ENCODE measurements at regions of chr1 and their contacts with region 1.

Region 1: GRCh38 chr1:17948594-17948993 is 159.0 kb upstream of the IGSF21 start:
- DNase-seq: no peak
- H3K4me3 ChIP-seq: no peak overlapping the region
- H3K27ac ChIP-seq: no peak overlapping the region
- H3K4me1 ChIP-seq: no peaks in the 10 kb centered on the region
- H3K27me3 ChIP-seq: peaks cover 28% of the 10 kb centered on the region
- CTCF ChIP-seq: no peak
- EP300 ChIP-seq: no peak
- POLR2A ChIP-seq: no peak

Region 2: DNA sequence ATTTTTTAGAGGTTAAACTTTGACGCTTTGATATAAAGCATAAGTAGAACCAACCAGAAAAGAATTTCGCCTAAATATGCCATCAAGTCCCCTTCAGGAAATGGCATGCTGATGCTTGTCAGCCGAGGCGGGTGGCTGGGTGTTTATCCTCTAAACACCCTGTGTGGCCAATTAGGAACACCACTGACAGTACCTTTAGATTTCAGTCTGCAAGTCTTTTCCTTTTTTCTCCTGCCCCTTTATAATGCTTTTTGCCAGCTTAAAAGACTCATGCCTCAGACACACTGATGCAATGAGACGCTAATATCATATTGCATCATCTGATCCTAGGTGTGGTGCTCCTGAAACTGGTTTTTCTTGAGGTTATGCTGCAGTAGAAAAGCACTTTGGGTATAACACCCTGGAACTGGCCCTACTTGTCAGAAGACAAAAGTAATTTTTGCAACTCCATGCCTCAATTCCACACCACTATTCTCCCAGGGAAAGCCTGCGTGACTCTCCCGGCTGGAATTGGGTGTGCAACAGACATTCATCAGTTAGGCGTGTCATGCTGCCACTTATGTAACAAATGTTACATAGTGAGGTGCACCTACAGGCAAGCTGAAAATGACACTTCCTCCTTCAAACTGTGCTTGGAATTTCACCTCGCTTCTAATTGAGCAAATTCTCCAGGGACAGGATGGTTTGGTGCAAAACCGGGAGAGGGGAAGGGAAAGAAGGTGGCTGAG is 507.2 kb before region 1 on chr1:
- in situ Hi-C with region 1: no loop called
- intact Hi-C with region 1: no loop called
- DNase-seq: no peak
- H3K4me3 ChIP-seq: no peak overlapping the region
- H3K27ac ChIP-seq: no peak overlapping the region
- H3K4me1 ChIP-seq: peaks cover 8 to 26% (median 16%) of the 10 kb centered on the region in 4 donors
- H3K27me3 ChIP-seq: no peaks in the 10 kb centered on the region
- CTCF ChIP-seq: peak in 2 of 5 experiments; percentile 18 to 37
- EP300 ChIP-seq: no peak
- POLR2A ChIP-seq: no peak

Region 3: GRCh38 chr1:17569200-17570161 is 379.1 kb before region 1 on chr1:
- in situ Hi-C with region 1: no loop called
- intact Hi-C with region 1: no loop called
- DNase-seq: peak; percentile 73
- H3K4me3 ChIP-seq: no peak overlapping the region
- H3K27ac ChIP-seq: peak overlapping the region; percentile 84 to 93 (median 86)
- H3K4me1 ChIP-seq: peaks cover 54 to 86% (median 80%) of the 10 kb centered on the region in 4 donors
- H3K27me3 ChIP-seq: no peaks in the 10 kb centered on the region
- CTCF ChIP-seq: no peak
- EP300 ChIP-seq: no peak
- POLR2A ChIP-seq: no peak

Region 4: DNA sequence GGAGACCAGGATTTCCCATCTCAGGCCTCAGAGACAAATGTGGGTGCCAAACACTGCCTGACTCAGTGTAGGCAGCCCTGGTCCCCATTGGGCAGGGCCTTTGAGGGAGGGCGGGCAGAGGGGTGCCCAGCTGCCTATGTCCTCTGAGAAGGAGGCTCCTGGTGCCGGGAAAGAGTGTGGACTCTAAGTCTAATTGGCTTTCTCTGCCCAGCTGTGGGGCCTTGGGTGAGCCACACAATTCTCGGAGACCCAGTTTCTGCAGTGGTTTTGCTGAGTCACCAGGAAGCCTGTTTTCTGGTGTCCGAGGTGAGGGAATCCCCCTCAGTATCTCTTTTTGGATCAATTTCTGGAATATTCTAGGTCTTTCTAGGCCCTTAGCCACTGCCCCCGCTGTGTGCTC is 228.7 kb before region 1 on chr1:
- in situ Hi-C with region 1: no loop called
- intact Hi-C with region 1: no loop called
- DNase-seq: no peak
- H3K4me3 ChIP-seq: no peak overlapping the region
- H3K27ac ChIP-seq: no peak overlapping the region
- H3K4me1 ChIP-seq: no peaks in the 10 kb centered on the region
- H3K27me3 ChIP-seq: peaks cover 3% of the 10 kb centered on the region
- CTCF ChIP-seq: no peak
- EP300 ChIP-seq: no peak
- POLR2A ChIP-seq: no peak

Region 5: DNA sequence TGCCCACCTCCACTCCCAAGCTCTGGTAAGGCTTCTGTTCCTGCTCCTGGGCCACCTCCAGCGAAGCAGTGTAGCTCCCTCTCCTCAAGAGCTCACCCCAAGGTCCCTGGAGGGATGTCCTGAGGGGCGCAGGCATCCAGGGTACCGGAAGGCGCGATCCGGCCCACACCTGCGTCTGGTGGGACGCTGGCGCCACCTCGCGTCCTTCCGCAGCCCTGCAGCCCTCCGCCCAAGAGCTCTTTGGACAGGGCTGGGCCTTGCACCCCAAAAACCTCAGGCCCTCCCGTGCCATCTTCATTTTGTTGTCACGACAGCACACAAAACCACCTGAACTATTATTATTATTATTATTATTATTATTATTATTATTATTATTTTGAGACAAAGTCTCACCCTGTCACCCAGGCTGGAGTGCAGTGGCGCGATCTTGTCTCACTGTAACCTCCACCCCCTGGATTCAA is 632.9 kb after region 1 on chr1:
- in situ Hi-C with region 1: no loop called
- intact Hi-C with region 1: loop called (anchors 5 kb)
- DNase-seq: peak; percentile 15
- H3K4me3 ChIP-seq: no peak overlapping the region
- H3K27ac ChIP-seq: no peak overlapping the region
- H3K4me1 ChIP-seq: no peaks in the 10 kb centered on the region
- H3K27me3 ChIP-seq: peaks cover 17% of the 10 kb centered on the region
- CTCF ChIP-seq: peak; percentile 56 to 85 (median 76)
- EP300 ChIP-seq: no peak
- POLR2A ChIP-seq: no peak

Measured in transverse colon (tissue), 4 donors.